Naive thymus-derived CD4-positive, alpha-beta T cell (primary cell): ENCODE measurements at regions of chr14 and their contacts with region 1.

Region 1: GRCh38 chr14:70622111-70622712 is 19.5 kb upstream of the TTC9 start:
- DNase-seq: peak in 8 of 9 donors; percentile 42 to 66 (median 56)
- ATAC-seq: peak; percentile 85
- H3K4me3 ChIP-seq: no peak overlapping the region
- H3K4me3 Mint-ChIP-seq: peak overlapping the region in 1 of 10 donors; percentile 11
- H3K27ac ChIP-seq: no peak overlapping the region
- H3K27ac Mint-ChIP-seq: peak overlapping the region in 3 of 9 donors; percentile 2 to 29 (median 17)
- H3K4me1 ChIP-seq: no peaks in the 10 kb centered on the region
- H3K4me1 Mint-ChIP-seq: peaks cover 0 to 10% (median 6%) of the 10 kb centered on the region in 7 donors
- H3K27me3 ChIP-seq: no peaks in the 10 kb centered on the region
- H3K27me3 Mint-ChIP-seq: peaks cover 0 to 20% (median 0%) of the 10 kb centered on the region in 5 donors

Region 2: DNA sequence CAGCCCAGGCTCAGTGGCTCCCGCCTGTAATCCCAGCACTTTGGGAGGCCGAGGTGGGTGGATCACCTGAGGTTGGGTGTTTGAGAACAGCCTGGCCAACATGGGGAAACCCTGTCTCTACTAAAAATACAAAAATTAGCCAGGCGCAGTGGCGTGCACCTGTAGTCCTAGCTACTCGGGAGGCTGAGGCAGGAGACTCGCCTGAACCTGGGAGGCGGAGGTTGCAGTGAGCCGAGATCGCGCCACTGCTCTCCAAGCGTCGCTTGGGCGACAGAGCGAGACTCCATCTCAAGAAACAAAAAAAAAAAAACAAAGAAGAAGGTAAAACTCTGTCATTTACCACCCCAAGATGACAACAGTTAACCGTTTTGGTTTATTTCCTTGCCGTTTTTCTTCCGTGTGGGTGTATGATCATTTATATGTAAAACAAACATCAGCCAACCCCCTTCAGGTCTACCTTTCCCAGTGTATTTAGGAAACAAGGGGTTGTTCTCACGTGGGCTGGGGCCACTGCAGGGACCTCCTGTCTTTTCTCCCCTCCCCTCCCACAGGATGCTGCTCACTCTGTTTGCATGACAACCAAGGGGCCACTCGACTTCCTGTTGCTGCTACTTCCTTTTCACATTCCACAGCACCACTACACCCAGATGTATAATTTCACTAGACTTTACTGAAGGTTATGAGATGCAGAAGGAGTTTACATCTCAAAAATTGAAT is 33.1 kb after region 1 on chr14:
- CTCF ChIA-PET with region 1: interaction called, 10 read pairs
- POLR2A ChIA-PET with region 1: interaction called, 3 read pairs
- intact Hi-C with region 1: loop called (anchors 1 to 2 kb)
- DNase-seq: peak; percentile 29 to 93 (median 91)
- ATAC-seq: peak; percentile 95
- H3K4me3 ChIP-seq: peak overlapping the region; percentile 43
- H3K4me3 Mint-ChIP-seq: peak overlapping the region; percentile 76 to 89 (median 85)
- H3K27ac ChIP-seq: peak overlapping the region; percentile 84
- H3K27ac Mint-ChIP-seq: peak overlapping the region; percentile 94 to 99 (median 98)
- H3K4me1 ChIP-seq: peaks cover 60 to 83% of the 10 kb centered on the region in 2 donors
- H3K4me1 Mint-ChIP-seq: peaks cover 66 to 98% (median 94%) of the 10 kb centered on the region in 7 donors
- H3K27me3 ChIP-seq: no peaks in the 10 kb centered on the region
- H3K27me3 Mint-ChIP-seq: no peaks in the 10 kb centered on the region

Region 3: DNA sequence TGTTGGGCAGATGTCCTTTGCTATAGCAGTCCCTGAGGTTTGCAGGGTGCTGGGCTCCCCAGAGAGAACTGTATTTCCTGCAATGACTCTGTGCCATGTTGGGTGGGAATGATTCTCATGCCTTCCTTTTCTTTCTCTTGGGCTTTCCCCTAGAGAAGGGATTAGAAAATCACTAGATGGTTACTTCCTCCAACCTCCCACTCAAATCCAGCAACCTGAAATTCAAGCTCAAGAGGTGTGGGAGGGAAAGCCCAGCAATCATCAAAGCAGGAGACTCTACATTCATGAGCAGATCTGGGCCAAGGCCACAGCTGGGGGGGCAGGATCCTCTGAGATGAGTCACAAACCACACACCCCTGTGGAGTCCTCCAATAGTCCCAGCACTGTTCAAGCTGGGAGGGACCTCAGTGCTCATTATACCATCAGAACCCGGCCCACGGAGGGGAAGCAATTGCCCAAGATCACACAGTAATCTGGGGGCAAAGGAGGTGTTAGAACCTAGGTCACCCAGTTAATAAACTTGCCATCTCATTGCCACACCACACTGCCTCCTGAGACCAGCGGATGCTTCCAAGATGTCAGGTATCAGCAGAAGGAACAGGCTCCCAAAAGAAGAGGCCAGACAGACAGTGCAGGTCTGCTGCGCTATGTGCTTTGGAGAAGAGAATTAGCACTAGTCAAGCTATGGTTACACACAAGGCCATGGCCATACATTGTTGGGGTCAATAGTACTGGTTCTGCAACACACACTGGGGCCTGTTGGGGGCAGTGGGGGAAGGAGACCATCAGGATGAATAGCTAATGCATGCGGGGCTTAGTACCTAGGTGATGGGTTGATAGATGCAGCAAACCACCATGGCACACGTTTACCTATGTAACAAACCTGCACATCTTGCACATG is 85.2 kb after region 1 on chr14:
- CTCF ChIA-PET with region 1: interaction called, 60 read pairs
- POLR2A ChIA-PET with region 1: interaction called, 3 read pairs
- intact Hi-C with region 1: loop called (anchors 1 to 2 kb)
- DNase-seq: no peak
- ATAC-seq: no peak
- H3K4me3 ChIP-seq: no peak overlapping the region
- H3K4me3 Mint-ChIP-seq: no peak overlapping the region
- H3K27ac ChIP-seq: no peak overlapping the region
- H3K27ac Mint-ChIP-seq: no peak overlapping the region
- H3K4me1 ChIP-seq: no peaks in the 10 kb centered on the region
- H3K4me1 Mint-ChIP-seq: peaks cover 0 to 4% (median 0%) of the 10 kb centered on the region in 7 donors
- H3K27me3 ChIP-seq: no peaks in the 10 kb centered on the region
- H3K27me3 Mint-ChIP-seq: peaks cover 0 to 12% (median 0%) of the 10 kb centered on the region in 5 donors

Region 4: DNA sequence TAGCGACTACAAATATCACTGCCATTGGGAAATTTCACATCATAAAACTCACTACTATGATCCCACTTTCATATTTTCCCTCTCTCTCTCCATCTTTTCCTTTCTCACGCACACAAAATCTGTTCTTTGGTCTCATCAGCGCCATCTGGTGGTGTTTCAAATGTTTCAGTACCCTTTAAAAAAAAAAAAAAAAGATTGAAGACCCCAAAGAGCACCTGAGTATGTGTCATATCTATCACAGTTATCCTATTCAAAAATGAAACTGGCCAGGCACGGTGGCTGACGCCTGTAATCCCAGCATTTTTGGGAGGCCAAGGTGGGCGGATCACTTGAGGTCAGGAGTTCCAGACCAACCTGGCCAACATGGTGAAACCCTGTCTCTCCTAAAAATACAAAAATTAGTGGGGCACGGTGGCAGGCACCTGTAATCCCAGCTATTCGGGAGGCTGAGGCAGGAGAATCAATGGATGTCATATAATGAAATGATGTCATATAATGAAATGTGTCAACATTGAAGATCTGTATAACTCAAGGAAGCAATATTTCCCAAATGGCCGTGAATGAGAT is 91.9 kb after region 1 on chr14:
- CTCF ChIA-PET with region 1: interaction called, 60 read pairs
- POLR2A ChIA-PET with region 1: interaction called, 3 read pairs
- intact Hi-C with region 1: loop called (anchors 1 kb)
- DNase-seq: peak in 7 of 9 donors; percentile 24 to 62 (median 43)
- ATAC-seq: no peak
- H3K4me3 ChIP-seq: no peak overlapping the region
- H3K4me3 Mint-ChIP-seq: peak overlapping the region in 2 of 10 donors; percentile 38 to 53
- H3K27ac ChIP-seq: no peak overlapping the region
- H3K27ac Mint-ChIP-seq: no peak overlapping the region
- H3K4me1 ChIP-seq: peaks cover 2 to 4% of the 10 kb centered on the region in 2 donors
- H3K4me1 Mint-ChIP-seq: peaks cover 3 to 7% (median 5%) of the 10 kb centered on the region in 7 donors
- H3K27me3 ChIP-seq: no peaks in the 10 kb centered on the region
- H3K27me3 Mint-ChIP-seq: peaks cover 0 to 9% (median 4%) of the 10 kb centered on the region in 5 donors

Region 5: DNA sequence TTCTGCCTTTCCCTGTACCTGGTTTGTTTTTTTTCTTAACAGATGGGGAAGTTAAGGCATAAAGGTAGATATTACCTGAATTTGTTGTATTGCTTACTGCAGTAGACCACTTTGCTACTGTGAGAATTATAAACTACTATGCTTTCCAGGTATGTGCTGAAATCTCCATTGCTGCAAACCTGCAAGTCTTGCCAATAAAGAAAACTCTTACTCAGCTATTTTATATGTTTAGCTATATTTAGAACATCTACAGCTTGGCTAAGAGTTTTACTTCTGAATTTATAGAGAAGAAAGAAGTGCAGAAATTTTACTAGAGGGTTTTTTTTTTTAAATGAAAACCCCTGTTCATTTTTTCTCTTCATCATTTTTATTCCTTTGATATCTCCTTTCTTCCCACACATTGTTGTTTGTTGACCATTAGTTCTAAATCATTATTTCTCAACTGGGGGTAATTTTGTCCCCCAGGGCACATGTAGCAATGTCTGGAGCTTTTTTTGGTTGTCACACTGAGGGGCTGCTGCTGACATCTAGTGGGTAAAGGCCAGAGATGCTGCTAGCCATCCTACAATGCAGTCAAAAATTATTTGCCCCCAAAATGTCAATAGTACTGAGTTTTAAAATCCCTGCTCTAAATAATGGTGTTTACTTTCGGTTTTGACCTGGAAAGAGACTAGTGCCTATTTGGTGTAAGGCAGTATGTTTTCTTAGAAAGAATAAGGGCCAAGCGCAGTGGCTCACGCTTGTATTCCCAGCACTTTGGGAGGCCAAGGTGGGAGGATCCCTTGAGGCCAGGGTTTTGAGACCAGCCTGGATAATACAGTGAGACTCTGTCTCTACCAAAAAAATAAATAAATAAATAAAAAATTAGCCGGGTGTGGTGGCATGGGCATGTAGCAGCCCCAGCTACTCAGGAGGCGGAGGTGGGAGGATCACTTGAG is 333.6 kb after region 1 on chr14:
- CTCF ChIA-PET with region 1: no interaction called
- POLR2A ChIA-PET with region 1: no interaction called
- intact Hi-C with region 1: loop called in 1 of 2 experiments (anchors 5 kb)
- DNase-seq: peak in 7 of 9 donors; percentile 29 to 67 (median 52)
- ATAC-seq: peak; percentile 80
- H3K4me3 ChIP-seq: no peak overlapping the region
- H3K4me3 Mint-ChIP-seq: peak overlapping the region in 2 of 10 donors; percentile 12 to 38
- H3K27ac ChIP-seq: no peak overlapping the region
- H3K27ac Mint-ChIP-seq: peak overlapping the region in 5 of 9 donors; percentile 8 to 85 (median 13)
- H3K4me1 ChIP-seq: peaks cover 18 to 19% of the 10 kb centered on the region in 2 donors
- H3K4me1 Mint-ChIP-seq: peaks cover 25 to 53% (median 40%) of the 10 kb centered on the region in 7 donors
- H3K27me3 ChIP-seq: no peaks in the 10 kb centered on the region
- H3K27me3 Mint-ChIP-seq: no peaks in the 10 kb centered on the region